Gastrocnemius medialis (tissue), 4 donors: ENCODE measurements at regions of chr1 and their contacts with region 1.

Region 1: DNA sequence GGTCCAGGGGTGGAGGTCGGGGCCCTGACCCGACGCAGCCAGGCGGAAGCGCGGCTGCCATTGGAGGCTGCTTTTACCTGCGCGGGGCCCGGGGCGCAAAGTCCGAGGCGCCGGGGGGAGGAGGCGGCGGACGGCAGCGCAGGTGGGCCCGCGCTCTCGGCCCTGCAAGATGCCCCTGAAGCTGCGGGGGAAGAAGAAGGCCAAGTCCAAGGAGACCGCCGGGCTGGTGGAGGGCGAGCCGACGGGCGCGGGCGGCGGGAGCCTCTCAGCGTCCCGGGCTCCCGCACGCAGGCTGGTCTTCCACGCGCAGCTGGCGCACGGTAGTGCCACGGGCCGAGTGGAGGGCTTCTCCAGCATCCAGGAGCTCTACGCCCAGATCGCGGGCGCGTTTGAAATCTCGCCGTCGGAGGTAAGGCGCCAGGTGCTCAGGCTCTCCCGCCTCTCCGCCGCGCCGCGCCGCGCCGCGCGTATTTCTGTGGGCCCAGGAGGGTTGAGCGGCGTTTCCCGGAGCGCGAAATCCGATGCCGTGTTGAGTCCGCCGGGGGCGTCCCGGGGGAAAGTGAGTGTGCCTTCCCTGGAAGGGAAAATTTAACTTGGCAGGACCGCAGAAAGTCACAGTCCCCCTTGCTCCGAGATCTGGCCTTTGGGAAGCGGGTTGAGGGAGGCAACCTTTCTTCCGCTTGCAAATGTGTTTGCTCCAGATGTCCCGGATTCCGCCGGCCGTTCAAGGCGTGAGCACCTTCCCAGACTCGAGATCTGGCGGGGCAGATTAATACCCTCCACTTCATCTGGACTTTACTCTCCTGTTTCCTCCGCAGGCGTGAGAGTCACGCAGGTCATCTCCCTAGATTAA is at the start of gene GIPC2:
- DNase-seq: peak in 1 of 2 donors; percentile 23
- ATAC-seq: peak; percentile 51 to 75
- H3K4me3 ChIP-seq: peak within 1 kb of the TSS; percentile 66 to 87 (median 76)
- H3K27ac ChIP-seq: peak within 1 kb of the TSS; percentile 70 to 84 (median 78)
- H3K4me1 ChIP-seq: peaks cover 17 to 34% of the 10 kb centered on the region in 2 donors
- H3K27me3 ChIP-seq: no peaks in the 10 kb centered on the region
- CTCF ChIP-seq: no peak
- POLR2A ChIP-seq: peak in 1 of 2 donors; percentile 5
- total RNA-seq, gene GIPC2: 0.67 to 1.5 (median 1.3) TPM

Region 2: DNA sequence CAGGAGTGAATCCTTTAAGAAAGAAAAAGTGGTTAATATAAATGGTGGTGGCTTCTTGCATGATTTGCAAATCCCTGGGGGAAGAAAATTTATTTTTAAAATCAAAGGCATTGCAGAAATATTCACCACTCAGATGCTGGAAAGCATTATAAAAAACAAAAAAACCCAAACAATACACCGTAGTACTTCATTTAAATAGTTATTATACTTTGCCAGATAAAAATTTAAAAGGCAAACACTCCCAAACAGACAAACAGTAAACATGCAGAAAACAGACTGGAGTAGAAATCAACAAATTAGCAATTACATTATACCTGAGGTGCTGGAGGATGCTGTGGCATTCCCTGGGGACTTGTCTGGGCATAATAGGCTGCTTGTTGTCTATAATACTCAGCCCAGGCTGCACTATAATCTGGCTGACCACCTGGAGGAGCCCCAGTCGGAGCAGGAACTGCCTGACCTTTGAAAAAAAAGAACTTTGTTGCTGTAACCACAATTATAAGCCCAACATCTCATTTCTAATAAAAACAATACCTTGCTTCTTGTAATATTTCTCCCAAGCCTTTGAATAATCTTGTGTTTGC is 97.2 kb before region 1 on chr1:
- in situ Hi-C with region 1: no loop called
- intact Hi-C with region 1: no loop called
- DNase-seq: no peak
- ATAC-seq: peak in 1 of 2 donors; percentile 37
- H3K4me3 ChIP-seq: no peak overlapping the region
- H3K27ac ChIP-seq: peak overlapping the region in 2 of 4 donors; percentile 6 to 16
- H3K4me1 ChIP-seq: peaks cover 0 to 5% of the 10 kb centered on the region in 2 donors
- H3K27me3 ChIP-seq: no peaks in the 10 kb centered on the region
- CTCF ChIP-seq: peak in 1 of 5 experiments; percentile 19
- POLR2A ChIP-seq: no peak

Region 3: DNA sequence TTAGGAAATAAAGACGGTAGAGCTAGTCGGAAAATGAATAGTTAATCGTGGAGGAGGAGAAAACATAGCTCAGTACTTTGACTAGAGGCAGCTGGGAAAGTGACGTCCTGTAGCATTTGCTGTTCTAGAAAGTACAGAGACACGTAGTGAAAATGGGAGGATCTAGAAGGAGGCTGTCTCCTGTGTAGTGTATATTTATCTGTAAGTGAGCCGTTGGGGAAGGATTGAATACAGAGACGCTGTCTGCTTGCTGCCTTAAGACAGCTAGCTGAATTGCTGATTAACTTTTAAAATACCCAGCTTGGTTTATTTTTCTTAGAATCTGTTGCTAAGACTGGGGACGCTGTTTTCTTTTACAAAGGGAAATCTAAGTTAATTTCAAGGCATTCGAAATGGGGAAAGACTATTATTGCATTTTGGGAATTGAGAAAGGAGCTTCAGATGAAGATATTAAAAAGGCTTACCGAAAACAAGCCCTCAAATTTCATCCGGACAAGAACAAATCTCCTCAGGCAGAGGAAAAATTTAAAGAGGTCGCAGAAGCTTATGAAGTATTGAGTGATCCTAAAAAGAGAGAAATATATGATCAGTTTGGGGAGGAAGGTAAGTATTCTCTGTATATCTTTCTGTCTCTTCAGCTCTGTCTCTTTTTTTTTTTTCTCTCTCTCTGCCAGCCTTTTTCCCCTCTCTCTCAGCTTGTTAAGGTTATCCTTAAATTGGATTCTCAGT is 41.3 kb before region 1 on chr1 and contains the start of gene DNAJB4:
- in situ Hi-C with region 1: no loop called
- intact Hi-C with region 1: loop called (anchors 5 kb)
- DNase-seq: peak; percentile 83 to 84
- ATAC-seq: peak; percentile 99
- H3K4me3 ChIP-seq: peak within 1 kb of the TSS; percentile 65 to 81 (median 70)
- H3K27ac ChIP-seq: peak within 1 kb of the TSS; percentile 83 to 97 (median 91)
- H3K4me1 ChIP-seq: peaks cover 19 to 41% of the 10 kb centered on the region in 2 donors
- H3K27me3 ChIP-seq: no peaks in the 10 kb centered on the region
- CTCF ChIP-seq: peak in 1 of 5 experiments; percentile 13
- POLR2A ChIP-seq: peak; percentile 92 to 100
- total RNA-seq, gene DNAJB4: 35.6 to 84.9 (median 45.3) TPM

Region 4: GRCh38 chr1:78145105-78145580 is 99.0 kb after region 1 on chr1:
- in situ Hi-C with region 1: no loop called
- intact Hi-C with region 1: no loop called
- DNase-seq: peak; percentile 6 to 34
- ATAC-seq: peak; percentile 70 to 86
- H3K4me3 ChIP-seq: no peak overlapping the region
- H3K27ac ChIP-seq: no peak overlapping the region
- H3K4me1 ChIP-seq: no peaks in the 10 kb centered on the region
- H3K27me3 ChIP-seq: no peaks in the 10 kb centered on the region
- CTCF ChIP-seq: peak; percentile 46 to 84 (median 63)
- POLR2A ChIP-seq: no peak